ENCODE measurements at regions of chr22 and their contacts with region 1.

Region 1: DNA sequence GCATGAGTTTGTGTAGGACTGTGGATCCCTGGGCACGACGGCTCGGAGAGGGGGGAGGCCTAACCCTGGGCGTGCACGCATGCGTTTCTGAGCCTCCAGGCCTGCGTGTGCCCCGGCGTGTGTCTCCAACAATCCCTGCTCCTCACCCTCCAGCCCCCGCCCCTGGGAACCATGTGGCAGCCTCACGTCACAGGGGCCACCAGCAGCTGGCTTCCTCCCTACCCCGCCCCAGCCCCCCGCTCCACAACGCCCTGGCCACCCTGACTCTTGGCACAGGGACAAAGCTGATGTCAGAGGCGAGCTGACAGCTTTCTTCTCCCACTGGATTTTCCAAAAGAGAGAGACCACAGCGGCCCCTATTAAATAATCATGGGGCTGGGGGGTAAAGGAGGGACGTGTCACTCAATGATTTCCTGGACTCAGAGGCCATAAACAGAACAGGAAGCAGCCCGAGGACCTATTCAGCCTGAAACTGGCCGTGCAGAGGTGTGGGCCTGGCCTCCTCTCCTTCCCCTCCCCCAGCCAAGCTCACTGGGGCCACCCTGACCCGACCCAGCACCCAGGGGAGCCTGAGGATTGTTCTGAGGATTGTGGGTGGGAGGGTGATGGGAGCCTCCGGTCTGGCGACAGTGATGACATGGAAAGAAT is 6.8 kb upstream of the LIF start:
- DNase-seq: no peak
- H3K4me3 ChIP-seq: no peak overlapping the region
- H3K27ac ChIP-seq: no peak overlapping the region
- H3K4me1 ChIP-seq: no peaks in the 10 kb centered on the region
- CTCF ChIP-seq: no peak

Region 2: GRCh38 chr22:30104501-30105156 is 148.7 kb before region 1 on chr22:
- CTCF ChIA-PET with region 1: interaction called, 3 read pairs
- POLR2A ChIA-PET with region 1: interaction called, 3 read pairs
- intact Hi-C with region 1: loop called (anchors 1 kb)
- DNase-seq: no peak
- H3K4me3 ChIP-seq: no peak overlapping the region
- H3K27ac ChIP-seq: no peak overlapping the region
- H3K4me1 ChIP-seq: no peaks in the 10 kb centered on the region
- CTCF ChIP-seq: no peak

Region 3: DNA sequence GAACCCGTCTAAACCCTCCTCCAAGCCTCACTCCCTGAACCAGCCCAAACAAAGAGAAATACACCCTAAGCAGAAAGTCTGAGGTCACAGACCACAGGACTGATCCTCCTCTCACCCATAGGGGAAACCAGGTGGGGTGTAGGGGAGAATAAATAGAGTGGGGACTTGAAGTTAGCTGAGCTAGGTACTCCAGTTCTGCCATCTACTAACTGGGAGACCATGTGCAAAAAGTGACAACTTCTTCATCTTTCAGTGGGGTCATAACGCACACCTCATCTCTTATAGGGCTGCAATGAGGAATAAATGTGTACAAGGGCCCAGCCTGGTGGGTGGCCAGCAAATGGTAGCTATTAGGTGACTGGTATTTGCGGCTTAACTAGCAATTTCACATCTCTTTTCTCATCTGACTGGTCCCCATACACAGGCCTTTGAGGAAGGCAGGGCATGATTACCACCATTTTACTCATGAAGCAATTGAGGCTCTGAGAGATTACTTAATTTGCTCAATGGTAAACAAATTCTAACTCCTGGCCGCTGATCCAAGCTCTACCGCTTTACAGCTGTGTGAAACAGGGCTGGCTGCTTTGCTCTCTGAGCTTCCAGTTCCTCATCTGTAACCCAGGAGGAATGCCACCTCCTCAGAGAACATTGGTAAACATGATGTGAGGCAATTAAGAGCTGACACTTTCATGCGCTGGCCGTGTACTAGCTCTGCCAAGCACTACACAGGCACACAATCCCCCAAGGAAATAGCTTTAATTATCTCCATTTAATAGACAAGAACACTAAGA is 56.8 kb after region 1 on chr22:
- CTCF ChIA-PET with region 1: no interaction called
- POLR2A ChIA-PET with region 1: no interaction called
- intact Hi-C with region 1: no loop called
- DNase-seq: peak; percentile 48
- H3K4me3 ChIP-seq: no peak overlapping the region
- H3K27ac ChIP-seq: peak overlapping the region; percentile 39
- H3K4me1 ChIP-seq: peaks cover 67% of the 10 kb centered on the region
- CTCF ChIP-seq: no peak

Region 4: GRCh38 chr22:30357236-30357570 is 103.9 kb after region 1 on chr22:
- CTCF ChIA-PET with region 1: no interaction called
- POLR2A ChIA-PET with region 1: no interaction called
- intact Hi-C with region 1: no loop called
- DNase-seq: no peak
- H3K4me3 ChIP-seq: peak overlapping the region; percentile 89
- H3K27ac ChIP-seq: no peak overlapping the region
- H3K4me1 ChIP-seq: peaks cover 27% of the 10 kb centered on the region
- CTCF ChIP-seq: no peak